ENCODE measurements at regions of chr22 and their contacts with region 1.

Region 1: DNA sequence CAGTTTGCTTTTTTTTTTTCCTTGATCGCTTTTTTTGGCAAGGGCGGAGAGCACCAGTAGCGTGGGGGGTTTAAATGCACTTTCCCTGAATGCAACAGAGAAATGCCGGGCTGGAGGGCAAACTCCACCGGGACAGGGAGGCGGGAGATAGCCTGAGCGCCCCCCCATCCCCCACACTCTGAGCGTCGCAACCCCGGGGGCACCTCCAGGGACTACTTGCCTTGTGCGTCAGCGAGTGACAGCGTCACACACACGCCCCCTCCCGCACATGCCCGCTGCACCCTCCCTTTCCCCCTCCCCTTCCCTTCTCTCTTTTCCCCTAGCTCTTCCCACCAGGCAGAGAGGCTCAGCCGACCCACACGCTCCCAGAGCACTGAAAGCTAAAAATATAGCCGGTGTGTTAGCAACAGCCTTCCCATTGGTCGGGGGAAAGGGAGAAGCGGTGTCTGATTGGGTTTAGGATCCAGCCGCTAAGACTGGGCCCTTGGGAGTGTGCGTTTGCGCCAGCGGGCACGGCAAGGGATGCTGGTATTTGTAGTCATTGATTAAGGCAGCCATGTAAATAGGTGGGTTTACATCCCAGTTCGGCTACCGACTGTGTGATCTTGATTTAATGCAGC is 1.7 kb upstream of the TOB2 start:
- DNase-seq: peak; percentile 100
- H3K4me3 ChIP-seq: peak overlapping the region; percentile 100
- H3K27ac ChIP-seq: peak overlapping the region; percentile 100
- H3K4me1 ChIP-seq: peaks cover 14% of the 10 kb centered on the region
- H3K27me3 ChIP-seq: no peaks in the 10 kb centered on the region
- CTCF ChIP-seq: no peak

Region 2: GRCh38 chr22:41091132-41092022 is 356.9 kb before region 1 on chr22:
- CTCF ChIA-PET with region 1: no interaction called
- POLR2A ChIA-PET with region 1: no interaction called
- intact Hi-C with region 1: loop called (anchors 5 kb)
- DNase-seq: peak; percentile 99
- H3K4me3 ChIP-seq: peak overlapping the region; percentile 67
- H3K27ac ChIP-seq: peak overlapping the region; percentile 99
- H3K4me1 ChIP-seq: peaks cover 11% of the 10 kb centered on the region
- H3K27me3 ChIP-seq: no peaks in the 10 kb centered on the region
- CTCF ChIP-seq: no peak

Region 3: GRCh38 chr22:41468381-41469217 is 20.3 kb after region 1 on chr22 and contains the starts of genes ACO2 and PHF5A:
- CTCF ChIA-PET with region 1: no interaction called
- POLR2A ChIA-PET with region 1: interaction called, 10 read pairs
- intact Hi-C with region 1: no loop called
- DNase-seq: peak; percentile 98
- H3K4me3 ChIP-seq: peak within 1 kb of the TSS; percentile 92
- H3K27ac ChIP-seq: peak within 1 kb of the TSS; percentile 98
- H3K4me1 ChIP-seq: peaks cover 22% of the 10 kb centered on the region
- H3K27me3 ChIP-seq: no peaks in the 10 kb centered on the region
- CTCF ChIP-seq: no peak
- total RNA-seq, gene ACO2: 125 and 127 TPM in 2 replicates
- total RNA-seq, gene PHF5A: 72.6 and 85.5 TPM in 2 replicates

Region 4: GRCh38 chr22:41517172-41518047 is 69.1 kb after region 1 on chr22:
- CTCF ChIA-PET with region 1: no interaction called
- POLR2A ChIA-PET with region 1: interaction called, 15 read pairs
- intact Hi-C with region 1: loop called (anchors 2 kb)
- DNase-seq: peak; percentile 74
- H3K4me3 ChIP-seq: no peak overlapping the region
- H3K27ac ChIP-seq: no peak overlapping the region
- H3K4me1 ChIP-seq: peaks cover 11% of the 10 kb centered on the region
- H3K27me3 ChIP-seq: no peaks in the 10 kb centered on the region
- CTCF ChIP-seq: peak; percentile 91

Measured in A673 (cell line).